CD4-positive, alpha-beta T cell (primary cell): ENCODE measurements at regions of chr2 and their contacts with region 1.

Region 1: DNA sequence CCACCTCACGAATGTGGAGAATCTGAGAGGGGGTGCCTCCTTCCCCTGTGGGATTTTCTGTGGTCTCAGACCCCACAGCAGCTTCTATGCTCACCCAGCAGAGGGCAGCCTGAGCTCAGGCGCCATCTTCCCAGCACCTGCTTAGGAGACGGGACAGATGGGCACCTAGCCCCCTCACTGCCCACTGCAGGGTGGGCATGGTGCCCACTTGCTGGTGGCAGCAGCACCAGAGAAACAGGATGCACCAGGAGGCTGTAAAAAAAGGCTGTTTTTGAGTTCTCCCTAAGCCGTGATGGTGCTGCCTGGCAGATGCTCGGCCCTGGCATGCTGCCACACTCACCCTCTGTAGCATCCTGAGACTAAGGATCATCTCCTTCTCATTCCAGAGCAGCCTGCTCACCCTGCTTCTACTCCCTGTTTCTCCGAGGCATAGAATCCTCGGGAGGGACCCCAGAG is 19.1 kb upstream of the SLC20A1 start:
- DNase-seq: peak; percentile 43 to 83 (median 60)
- ATAC-seq: peak; percentile 38
- H3K4me3 ChIP-seq: peak overlapping the region; percentile 41
- H3K4me3 Mint-ChIP-seq: peak overlapping the region; percentile 74
- H3K27ac ChIP-seq: peak overlapping the region in 1 of 2 donors; percentile 33
- H3K27ac Mint-ChIP-seq: peak overlapping the region; percentile 90
- H3K4me1 ChIP-seq: peaks cover 72% of the 10 kb centered on the region
- H3K4me1 Mint-ChIP-seq: peaks cover 69% of the 10 kb centered on the region
- H3K27me3 ChIP-seq: no peaks in the 10 kb centered on the region
- H3K27me3 Mint-ChIP-seq: no peaks in the 10 kb centered on the region
- CTCF ChIP-seq: peak; percentile 95

Region 2: DNA sequence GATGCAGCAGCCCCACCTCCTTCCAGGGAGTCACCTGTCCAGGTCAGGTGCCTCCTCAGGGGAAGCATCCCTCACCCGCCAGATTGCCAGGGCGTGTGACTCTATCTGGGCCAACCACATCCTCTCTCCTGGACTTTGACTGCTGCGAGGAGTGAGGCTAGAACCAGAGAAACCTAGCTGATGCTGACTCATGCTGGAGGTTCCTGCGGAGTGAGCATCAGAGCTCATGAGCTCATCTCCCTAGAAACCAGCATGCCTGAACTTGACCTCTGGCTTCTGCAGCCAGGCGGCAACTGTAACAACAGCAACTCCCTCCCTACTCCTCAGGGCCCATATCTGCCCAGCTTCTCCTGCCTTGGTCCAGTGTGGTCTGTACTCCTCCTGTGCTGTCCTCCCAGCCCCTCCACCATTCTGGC is 65.9 kb after region 1 on chr2:
- CTCF ChIA-PET with region 1: interaction called, 41 read pairs
- POLR2A ChIA-PET with region 1: interaction called, 26 read pairs
- intact Hi-C with region 1: loop called (anchors 1 kb)
- DNase-seq: peak in 12 of 14 experiments; percentile 12 to 85 (median 35)
- ATAC-seq: peak; percentile 69
- H3K4me3 ChIP-seq: no peak overlapping the region
- H3K4me3 Mint-ChIP-seq: peak overlapping the region; percentile 14
- H3K27ac ChIP-seq: peak overlapping the region in 1 of 2 donors; percentile 48
- H3K27ac Mint-ChIP-seq: peak overlapping the region; percentile 51
- H3K4me1 ChIP-seq: peaks cover 31% of the 10 kb centered on the region
- H3K4me1 Mint-ChIP-seq: peaks cover 22% of the 10 kb centered on the region
- H3K27me3 ChIP-seq: peaks cover 0 to 3% of the 10 kb centered on the region in 2 experiments
- H3K27me3 Mint-ChIP-seq: no peaks in the 10 kb centered on the region
- CTCF ChIP-seq: no peak